HCT116 (cell line): ENCODE measurements at regions of chr5 and their contacts with region 1.

Region 1: DNA sequence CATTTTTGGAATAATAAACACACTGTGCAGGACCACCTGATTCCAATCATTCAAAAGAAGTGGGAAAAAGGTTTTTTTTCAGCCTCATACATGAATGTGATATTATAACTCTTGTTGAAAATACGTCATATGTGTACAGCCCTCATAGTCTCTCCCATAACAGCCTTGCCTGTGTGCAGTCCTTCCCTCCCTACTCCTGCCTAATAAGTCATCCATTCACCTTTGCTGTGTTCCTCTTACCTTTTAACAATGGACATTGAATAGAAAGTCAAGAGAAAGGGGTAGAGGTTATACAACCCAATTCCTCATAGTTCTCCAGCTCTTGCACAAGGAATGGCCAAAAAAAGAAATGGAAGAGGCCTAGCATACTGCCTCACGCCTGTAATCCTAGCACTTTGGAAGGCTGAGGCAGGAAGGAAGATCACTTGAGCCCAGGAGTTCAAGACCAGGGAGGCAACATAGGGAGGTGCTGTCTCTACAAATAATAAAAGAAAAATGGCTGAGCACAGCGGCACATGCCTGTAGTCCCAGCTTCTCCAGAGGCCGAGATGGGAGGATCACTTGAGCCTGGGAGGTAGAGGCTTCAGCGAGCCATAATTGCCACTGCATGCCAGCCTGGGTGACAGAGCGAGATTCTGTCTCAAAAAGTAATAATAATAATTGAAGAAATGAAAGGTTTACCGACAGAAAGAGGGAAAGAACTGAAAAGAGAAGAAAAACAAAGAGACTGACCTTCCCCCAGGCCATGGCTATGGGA is 356.1 kb upstream of the KIF2A start:
- DNase-seq: no peak
- ATAC-seq: no peak
- H3K4me3 ChIP-seq: no peak overlapping the region
- H3K27ac ChIP-seq: no peak overlapping the region
- H3K4me1 ChIP-seq: no peaks in the 10 kb centered on the region
- H3K27me3 ChIP-seq: peaks cover 29% of the 10 kb centered on the region
- CTCF ChIP-seq: no peak
- POLR2A ChIP-seq: no peak
- RAD21 ChIP-seq: no peak

Region 2: GRCh38 chr5:61966997-61967396 is 17.1 kb after region 1 on chr5:
- CTCF ChIA-PET with region 1: no interaction called
- POLR2A ChIA-PET with region 1: no interaction called
- RAD21 ChIA-PET with region 1: no interaction called
- intact Hi-C with region 1: loop called (anchors 1 kb)
- DNase-seq: no peak
- ATAC-seq: no peak
- H3K4me3 ChIP-seq: no peak overlapping the region
- H3K27ac ChIP-seq: no peak overlapping the region
- H3K4me1 ChIP-seq: no peaks in the 10 kb centered on the region
- H3K27me3 ChIP-seq: peaks cover 39% of the 10 kb centered on the region
- CTCF ChIP-seq: no peak
- POLR2A ChIP-seq: no peak
- RAD21 ChIP-seq: no peak